Aorta (tissue), 5 donors: ENCODE measurements at regions of chr21 and their contacts with region 1.

Region 1: DNA sequence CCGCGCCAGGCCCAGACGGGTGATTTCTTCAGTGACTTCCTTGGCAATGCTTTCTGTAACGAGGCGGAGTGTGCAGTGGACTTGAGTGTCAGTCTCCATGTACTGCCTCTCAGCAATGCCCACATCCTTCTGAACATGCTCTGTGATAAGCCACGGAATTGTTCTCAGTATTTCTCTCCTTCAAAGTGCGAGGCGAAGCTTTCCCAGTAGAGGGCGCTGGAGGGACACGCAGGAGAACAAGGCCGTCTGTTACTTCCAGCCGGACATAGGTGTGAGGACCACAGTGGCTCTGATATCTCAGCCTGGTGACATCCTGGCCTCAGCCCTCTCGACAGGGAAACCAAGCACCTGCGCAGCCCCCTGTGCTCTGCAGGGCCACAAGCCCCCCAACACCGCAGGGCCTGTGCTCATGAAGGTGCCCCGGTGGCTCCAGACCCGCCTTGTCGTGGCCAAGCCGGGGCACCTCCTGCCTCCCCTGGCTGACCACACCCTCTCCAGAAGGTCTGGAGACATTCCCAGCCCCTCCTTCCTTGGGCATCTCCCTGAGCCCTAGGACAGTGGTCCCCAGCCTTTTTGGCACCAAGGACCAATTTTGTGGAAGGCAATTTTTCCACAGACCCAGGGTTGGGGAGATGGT is 46.1 kb upstream of the BACE2 start:
- DNase-seq: peak; percentile 91 to 94
- ATAC-seq: peak; percentile 84
- H3K4me3 ChIP-seq: no peak overlapping the region
- H3K27ac ChIP-seq: no peak overlapping the region
- H3K4me1 ChIP-seq: no peaks in the 10 kb centered on the region
- H3K27me3 ChIP-seq: no peaks in the 10 kb centered on the region

Region 2: GRCh38 chr21:41024753-41025254 is 97.1 kb before region 1 on chr21:
- intact Hi-C with region 1: no loop called
- DNase-seq: no peak
- ATAC-seq: no peak
- H3K4me3 ChIP-seq: no peak overlapping the region
- H3K27ac ChIP-seq: no peak overlapping the region
- H3K4me1 ChIP-seq: no peaks in the 10 kb centered on the region
- H3K27me3 ChIP-seq: no peaks in the 10 kb centered on the region

Region 3: GRCh38 chr21:41080485-41081121 is 41.3 kb before region 1 on chr21:
- intact Hi-C with region 1: no loop called
- DNase-seq: no peak
- ATAC-seq: no peak
- H3K4me3 ChIP-seq: no peak overlapping the region
- H3K27ac ChIP-seq: no peak overlapping the region
- H3K4me1 ChIP-seq: no peaks in the 10 kb centered on the region
- H3K27me3 ChIP-seq: no peaks in the 10 kb centered on the region

Region 4: DNA sequence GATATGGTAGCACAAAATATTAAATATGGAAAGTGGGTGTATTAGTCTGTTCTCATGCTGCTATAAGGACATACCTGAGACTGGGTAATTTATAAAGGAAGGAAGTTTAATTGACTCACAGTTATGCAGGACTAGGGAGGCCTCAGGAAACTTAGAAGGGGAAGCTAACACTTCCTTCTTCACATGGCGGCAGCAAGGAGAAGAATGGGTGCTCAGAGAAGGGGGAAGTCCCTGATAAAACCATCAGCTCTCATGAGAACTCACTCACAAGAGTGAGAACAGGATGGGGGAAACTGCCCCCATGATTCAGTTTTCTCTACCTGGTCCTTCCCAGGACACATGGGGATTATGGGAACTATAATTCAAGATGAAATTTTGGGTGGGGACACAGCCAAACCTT is 30.2 kb after region 1 on chr21:
- intact Hi-C with region 1: no loop called
- DNase-seq: no peak
- ATAC-seq: no peak
- H3K4me3 ChIP-seq: no peak overlapping the region
- H3K27ac ChIP-seq: no peak overlapping the region
- H3K4me1 ChIP-seq: no peaks in the 10 kb centered on the region
- H3K27me3 ChIP-seq: no peaks in the 10 kb centered on the region

Region 5: GRCh38 chr21:41247561-41248284 is 125.8 kb after region 1 on chr21:
- intact Hi-C with region 1: loop called in 1 of 2 experiments (anchors 10 kb)
- DNase-seq: peak; percentile 87 to 92
- ATAC-seq: peak; percentile 90
- H3K4me3 ChIP-seq: no peak overlapping the region
- H3K27ac ChIP-seq: peak overlapping the region; percentile 73 to 91
- H3K4me1 ChIP-seq: peaks cover 4 to 8% of the 10 kb centered on the region in 2 donors
- H3K27me3 ChIP-seq: no peaks in the 10 kb centered on the region

Region 6: DNA sequence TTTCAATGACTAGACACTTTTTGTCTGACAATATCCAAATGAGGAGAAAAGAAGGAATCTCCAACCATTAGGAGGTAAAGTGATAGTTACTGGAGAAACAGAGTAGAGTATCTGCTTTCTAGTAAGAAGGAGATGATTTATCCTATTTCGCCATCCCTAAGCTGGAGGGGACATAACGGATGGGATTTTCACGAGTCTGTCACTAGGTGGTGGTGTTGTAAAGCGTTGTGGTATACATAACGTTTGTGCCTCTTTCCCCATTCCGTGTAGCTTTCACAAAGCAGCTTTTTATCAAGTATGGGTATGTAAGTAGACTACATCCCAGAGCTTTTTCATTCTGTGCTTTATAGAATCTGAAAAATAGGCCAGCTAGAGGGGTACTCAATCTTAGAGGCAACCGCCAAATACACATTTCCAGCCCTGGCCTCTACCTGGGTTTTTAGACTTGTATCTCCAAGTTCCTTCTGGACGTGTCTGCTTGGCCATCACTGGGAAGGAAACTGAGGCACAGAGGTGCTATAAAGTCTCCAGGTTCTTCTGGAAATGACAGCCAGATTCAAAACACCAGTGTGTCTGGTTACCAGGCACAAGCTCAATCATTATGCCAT is 161.4 kb after region 1 on chr21:
- intact Hi-C with region 1: loop called in 1 of 2 experiments (anchors 5 kb)
- DNase-seq: no peak
- ATAC-seq: peak; percentile 90
- H3K4me3 ChIP-seq: no peak overlapping the region
- H3K27ac ChIP-seq: no peak overlapping the region
- H3K4me1 ChIP-seq: no peaks in the 10 kb centered on the region
- H3K27me3 ChIP-seq: no peaks in the 10 kb centered on the region

Region 7: DNA sequence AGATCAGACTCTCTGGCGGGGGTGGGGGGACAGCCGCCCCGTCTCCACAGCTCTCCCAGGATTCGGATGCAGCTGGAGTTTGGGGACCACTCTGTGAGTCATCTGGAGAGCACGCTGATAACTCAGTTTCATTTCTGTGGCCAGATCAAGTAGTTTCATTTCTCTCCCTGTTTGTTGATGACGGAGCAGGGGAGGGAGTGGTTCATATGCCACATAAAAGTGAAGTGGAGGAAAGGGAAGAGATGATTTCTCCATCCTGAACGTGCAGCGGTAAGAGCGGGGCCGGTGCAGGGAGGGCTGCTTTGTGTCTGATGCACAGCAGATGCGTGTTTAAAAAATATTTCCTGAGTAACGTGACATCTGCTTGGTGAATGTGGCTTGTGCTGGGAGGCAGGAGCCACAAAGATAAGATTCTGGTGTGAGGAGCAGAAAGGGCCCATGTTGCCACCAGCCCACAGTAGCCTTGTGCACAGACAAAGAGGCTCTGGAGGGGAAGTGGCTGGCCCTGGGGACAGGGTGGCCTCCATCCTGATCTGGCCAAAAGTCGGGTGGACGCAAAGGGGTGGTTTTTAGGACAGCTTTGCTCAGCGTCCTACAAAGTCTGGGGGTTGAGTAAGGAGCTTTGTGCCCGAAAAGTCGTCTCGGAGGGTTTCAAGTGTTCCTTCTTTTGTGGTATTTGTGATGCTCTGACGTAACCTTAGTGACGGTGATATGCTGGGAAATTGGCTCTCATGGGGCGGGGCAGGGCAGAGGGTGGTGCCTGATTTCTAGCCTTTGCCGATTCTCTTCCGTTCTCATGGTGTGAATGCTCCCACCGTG is 240.1 kb after region 1 on chr21 and contains the start of gene MX2:
- intact Hi-C with region 1: loop called in 1 of 2 experiments (anchors 10 kb)
- DNase-seq: peak; percentile 76 to 82
- ATAC-seq: peak; percentile 75
- H3K4me3 ChIP-seq: no peak within 1 kb of the TSS
- H3K27ac ChIP-seq: no peak within 1 kb of the TSS
- H3K4me1 ChIP-seq: no peaks in the 10 kb centered on the region
- H3K27me3 ChIP-seq: no peaks in the 10 kb centered on the region
- total RNA-seq, gene MX2: 21.5 to 21.8 TPM

Region 8: GRCh38 chr21:41419911-41420862 is 298.3 kb after region 1 on chr21:
- intact Hi-C with region 1: loop called in 1 of 2 experiments (anchors 10 kb)
- DNase-seq: peak; percentile 91 to 94
- ATAC-seq: peak; percentile 94
- H3K4me3 ChIP-seq: peak overlapping the region; percentile 15 to 57
- H3K27ac ChIP-seq: peak overlapping the region in 1 of 2 donors; percentile 61
- H3K4me1 ChIP-seq: no peaks in the 10 kb centered on the region
- H3K27me3 ChIP-seq: no peaks in the 10 kb centered on the region

Region 9: DNA sequence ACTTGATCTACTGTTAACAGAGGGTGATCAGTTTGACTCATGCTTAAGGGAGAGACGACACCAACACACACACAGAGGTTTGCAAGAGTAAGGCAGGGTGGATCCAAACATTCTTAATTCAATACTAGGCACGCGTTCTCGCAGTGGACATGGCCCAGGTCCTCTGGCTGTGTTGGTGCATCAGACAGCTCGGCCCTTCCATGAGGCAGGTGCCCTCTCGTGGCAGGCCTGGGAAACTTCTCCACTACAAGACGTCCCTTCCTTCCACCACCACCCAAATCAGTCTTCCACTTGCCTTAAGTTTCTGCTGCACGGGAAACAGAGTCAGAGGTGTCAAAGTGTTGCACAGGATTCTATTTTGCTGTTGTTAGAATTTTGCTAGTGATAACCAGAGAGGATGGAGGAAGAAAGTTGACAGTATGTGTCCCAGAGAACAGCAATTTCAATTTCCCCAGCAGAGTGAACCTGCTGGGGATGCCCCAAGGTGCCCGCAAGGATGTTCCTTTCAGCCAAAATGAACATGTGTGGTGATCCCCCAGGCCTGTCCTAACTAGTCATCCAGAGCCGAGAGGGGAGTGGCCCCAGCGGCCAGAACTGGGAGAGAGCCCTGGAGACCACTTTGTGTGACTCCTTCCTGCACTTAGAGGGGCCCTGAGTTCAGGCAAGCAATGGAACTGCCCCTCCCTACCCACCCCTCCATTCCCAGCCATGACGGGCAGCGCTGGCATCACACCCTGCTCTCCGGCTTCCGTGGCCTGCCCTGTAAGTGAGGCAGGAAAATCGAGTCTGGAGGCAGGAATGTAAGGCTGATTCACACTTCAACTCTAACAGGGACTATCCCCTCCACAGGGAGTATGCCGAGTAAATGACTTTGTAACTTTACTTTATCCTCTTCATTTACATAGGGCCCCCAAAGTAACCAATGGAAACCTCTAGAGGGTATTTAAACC is 338.9 kb after region 1 on chr21:
- intact Hi-C with region 1: loop called (anchors 2 kb)
- DNase-seq: peak; percentile 85 to 91
- ATAC-seq: peak; percentile 91
- H3K4me3 ChIP-seq: no peak overlapping the region
- H3K27ac ChIP-seq: no peak overlapping the region
- H3K4me1 ChIP-seq: no peaks in the 10 kb centered on the region
- H3K27me3 ChIP-seq: no peaks in the 10 kb centered on the region